Endothelial cell of umbilical vein (primary cell): ENCODE measurements at regions of chr9 and their contacts with region 1.

Region 1: DNA sequence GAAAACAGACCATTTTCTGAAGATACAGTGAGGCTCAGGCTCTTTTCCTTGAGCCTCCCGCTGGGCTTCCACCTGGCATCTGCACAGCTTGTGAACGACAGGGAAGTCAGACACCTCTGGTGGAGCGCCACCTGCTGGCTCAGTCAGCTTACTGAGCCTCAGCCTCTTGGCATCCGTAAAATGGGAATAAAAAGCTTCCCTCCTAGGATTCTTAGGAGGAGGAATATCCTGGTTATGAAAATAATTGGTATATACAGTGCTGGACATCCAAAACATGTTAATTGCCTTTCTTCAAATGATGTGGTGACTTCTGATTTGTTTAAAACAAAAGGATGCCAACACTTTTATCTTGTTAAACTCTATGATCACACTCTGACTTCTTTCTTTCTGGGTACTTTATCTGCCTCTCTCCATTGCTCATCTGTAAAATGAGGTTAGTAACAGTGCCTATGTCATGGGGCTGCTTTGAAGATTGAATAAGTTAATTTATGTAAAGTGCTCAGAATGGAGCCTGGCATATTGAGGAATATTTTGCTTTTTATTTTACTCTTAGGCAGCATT is 67.5 kb downstream of the MAMDC2 start:
- DNase-seq: peak; percentile 73
- H3K4me3 ChIP-seq: no peak overlapping the region
- H3K27ac ChIP-seq: no peak overlapping the region
- H3K4me1 ChIP-seq: peaks cover 19% of the 10 kb centered on the region
- H3K27me3 ChIP-seq: peaks cover 3 to 4% of the 10 kb centered on the region in 2 experiments
- CTCF ChIP-seq: peak; percentile 88 to 94
- POLR2A ChIP-seq: no peak

Region 2: GRCh38 chr9:69809304-69809863 is 301.7 kb before region 1 on chr9:
- CTCF ChIA-PET with region 1: interaction called, 4 read pairs
- POLR2A ChIA-PET with region 1: no interaction called
- dilution Hi-C with region 1: no loop called
- intact Hi-C with region 1: loop called (anchors 2 kb)
- DNase-seq: peak; percentile 36
- H3K4me3 ChIP-seq: no peak overlapping the region
- H3K27ac ChIP-seq: no peak overlapping the region
- H3K4me1 ChIP-seq: no peaks in the 10 kb centered on the region
- H3K27me3 ChIP-seq: peaks cover 41 to 46% of the 10 kb centered on the region in 2 experiments
- CTCF ChIP-seq: peak; percentile 33 to 35
- POLR2A ChIP-seq: no peak

Region 3: DNA sequence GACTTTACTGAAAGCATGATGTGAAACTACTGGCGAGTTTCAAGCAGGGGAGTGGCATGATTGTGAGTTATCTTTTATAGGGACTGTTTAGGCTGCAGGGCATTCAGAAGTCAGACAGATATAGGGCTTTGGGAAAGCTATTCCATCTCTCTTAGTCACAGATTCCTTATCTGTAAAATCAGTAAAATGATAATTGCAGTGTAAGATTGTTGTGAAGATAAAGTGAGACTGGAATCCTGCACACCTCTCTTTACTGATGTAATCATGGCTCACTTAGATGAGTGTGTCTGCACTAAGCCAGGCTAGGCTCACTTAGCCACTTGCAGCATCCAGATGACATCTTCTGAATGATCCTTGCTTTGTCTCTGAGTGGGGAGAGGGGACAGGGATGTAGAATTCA is 149.3 kb before region 1 on chr9:
- CTCF ChIA-PET with region 1: interaction called, 597 read pairs
- POLR2A ChIA-PET with region 1: no interaction called
- dilution Hi-C with region 1: loop called (anchors 25 kb)
- intact Hi-C with region 1: no loop called
- DNase-seq: no peak
- H3K4me3 ChIP-seq: no peak overlapping the region
- H3K27ac ChIP-seq: no peak overlapping the region
- H3K4me1 ChIP-seq: no peaks in the 10 kb centered on the region
- H3K27me3 ChIP-seq: no peaks in the 10 kb centered on the region
- CTCF ChIP-seq: no peak
- POLR2A ChIP-seq: no peak

Region 4: DNA sequence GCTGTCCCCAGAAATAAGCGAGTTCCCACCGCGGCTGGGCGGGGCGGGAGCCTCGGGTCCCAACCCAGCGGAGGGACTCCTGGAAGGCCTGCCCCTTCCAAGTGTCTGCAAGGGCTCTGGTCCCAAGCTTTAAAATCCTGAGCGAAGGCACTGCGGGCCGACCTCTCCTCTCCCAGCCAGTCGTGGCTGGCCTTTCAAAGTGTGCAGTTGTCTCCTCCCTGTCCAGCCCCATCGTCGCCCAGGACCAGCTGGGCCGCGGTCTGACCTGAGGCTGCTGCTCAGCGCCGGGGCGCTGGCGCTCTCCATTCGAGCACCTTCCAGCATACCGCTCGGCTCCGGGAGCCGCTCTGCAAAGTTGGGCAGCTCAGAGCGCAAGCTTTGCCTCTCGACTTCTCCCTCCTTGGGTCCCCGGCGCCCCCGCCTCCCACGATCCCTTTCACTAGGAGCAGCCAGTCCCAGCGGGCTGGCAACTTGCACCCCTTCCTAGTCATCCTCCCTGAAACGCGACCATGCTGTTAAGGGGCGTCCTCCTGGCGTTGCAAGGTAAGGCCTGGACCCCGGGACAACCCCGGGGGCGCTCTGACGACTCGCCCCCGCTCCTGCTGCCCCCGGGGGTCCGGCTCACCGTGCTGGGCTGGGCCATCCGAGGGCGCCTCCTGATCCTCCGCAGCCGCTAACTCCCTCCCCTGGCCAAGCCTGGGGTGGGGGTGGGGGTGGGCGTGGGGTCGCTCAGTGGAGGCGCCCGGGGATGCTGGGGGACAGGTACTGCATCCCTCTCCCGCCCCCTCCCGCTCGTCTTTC is 67.2 kb before region 1 on chr9 and contains the start of gene MAMDC2:
- CTCF ChIA-PET with region 1: interaction called, 52 read pairs
- POLR2A ChIA-PET with region 1: no interaction called
- dilution Hi-C with region 1: no loop called
- intact Hi-C with region 1: loop called (anchors 2 kb)
- DNase-seq: peak; percentile 36
- H3K4me3 ChIP-seq: peak within 1 kb of the TSS; percentile 44 to 77 (median 54)
- H3K27ac ChIP-seq: no peak within 1 kb of the TSS
- H3K4me1 ChIP-seq: peaks cover 8% of the 10 kb centered on the region
- H3K27me3 ChIP-seq: no peaks in the 10 kb centered on the region
- CTCF ChIP-seq: no peak
- POLR2A ChIP-seq: no peak
- total RNA-seq, gene MAMDC2: 0.60 and 0.85 TPM in 2 replicates

Region 5: DNA sequence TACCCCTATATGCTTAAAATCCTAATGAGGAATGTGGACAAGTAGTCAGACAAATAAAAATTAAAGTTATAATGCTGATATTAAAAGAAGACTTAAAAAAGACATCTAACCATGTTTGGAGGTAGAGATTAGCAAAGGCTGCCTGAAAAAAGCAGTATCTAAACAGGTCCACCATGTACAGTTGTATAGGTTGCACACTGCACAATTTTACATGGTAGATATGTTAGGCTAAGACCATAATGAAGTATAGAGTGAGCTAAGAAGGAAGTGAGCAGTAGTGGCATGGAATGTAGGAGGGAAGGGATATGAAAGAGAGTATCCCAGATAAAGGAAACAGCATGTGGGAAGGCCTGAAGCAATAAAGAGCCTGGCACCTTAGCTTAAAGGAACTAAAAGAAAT is 16.4 kb before region 1 on chr9:
- CTCF ChIA-PET with region 1: interaction called, 61 read pairs
- POLR2A ChIA-PET with region 1: no interaction called
- dilution Hi-C with region 1: no loop called
- intact Hi-C with region 1: no loop called
- DNase-seq: no peak
- H3K4me3 ChIP-seq: no peak overlapping the region
- H3K27ac ChIP-seq: no peak overlapping the region
- H3K4me1 ChIP-seq: no peaks in the 10 kb centered on the region
- H3K27me3 ChIP-seq: peaks cover 4 to 25% of the 10 kb centered on the region in 2 experiments
- CTCF ChIP-seq: no peak
- POLR2A ChIP-seq: no peak

Region 6: GRCh38 chr9:70625078-70625477 is 514.0 kb after region 1 on chr9:
- CTCF ChIA-PET with region 1: no interaction called
- POLR2A ChIA-PET with region 1: no interaction called
- dilution Hi-C with region 1: no loop called
- intact Hi-C with region 1: no loop called
- DNase-seq: no peak
- H3K4me3 ChIP-seq: no peak overlapping the region
- H3K27ac ChIP-seq: no peak overlapping the region
- H3K4me1 ChIP-seq: no peaks in the 10 kb centered on the region
- H3K27me3 ChIP-seq: peaks cover 0 to 2% of the 10 kb centered on the region in 2 experiments
- CTCF ChIP-seq: no peak
- POLR2A ChIP-seq: no peak

Region 7: GRCh38 chr9:70747261-70747718 is 636.2 kb after region 1 on chr9:
- CTCF ChIA-PET with region 1: no interaction called
- POLR2A ChIA-PET with region 1: no interaction called
- dilution Hi-C with region 1: no loop called
- intact Hi-C with region 1: no loop called
- DNase-seq: no peak
- H3K4me3 ChIP-seq: no peak overlapping the region
- H3K27ac ChIP-seq: no peak overlapping the region
- H3K4me1 ChIP-seq: no peaks in the 10 kb centered on the region
- H3K27me3 ChIP-seq: no peaks in the 10 kb centered on the region
- CTCF ChIP-seq: no peak
- POLR2A ChIP-seq: no peak

Region 8: DNA sequence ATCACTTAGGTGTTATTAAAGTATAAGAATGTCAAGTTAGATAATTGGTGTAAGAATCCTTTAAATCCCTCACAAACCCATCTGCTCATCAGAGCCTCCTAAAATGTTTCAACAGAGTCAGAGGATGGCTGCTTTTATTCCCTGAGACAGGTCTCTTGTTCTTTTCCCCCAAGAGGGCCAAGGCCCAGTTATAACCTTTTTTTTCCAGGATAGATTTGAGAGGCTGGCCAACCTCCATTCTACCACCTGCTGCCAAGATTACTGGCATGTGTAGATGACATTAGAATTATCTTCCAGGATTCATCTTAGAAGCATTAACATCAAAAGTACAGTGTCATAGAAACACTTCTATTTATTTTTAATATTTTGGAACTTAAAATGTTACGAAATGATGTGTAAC is 705.2 kb after region 1 on chr9:
- CTCF ChIA-PET with region 1: no interaction called
- POLR2A ChIA-PET with region 1: no interaction called
- dilution Hi-C with region 1: no loop called
- intact Hi-C with region 1: no loop called
- DNase-seq: no peak
- H3K4me3 ChIP-seq: no peak overlapping the region
- H3K27ac ChIP-seq: no peak overlapping the region
- H3K4me1 ChIP-seq: no peaks in the 10 kb centered on the region
- H3K27me3 ChIP-seq: no peaks in the 10 kb centered on the region
- CTCF ChIP-seq: no peak
- POLR2A ChIP-seq: no peak